ENCODE measurements at regions of chr10 and their contacts with region 1.

Region 1: GRCh38 chr10:48656241-48656913 is 28.3 kb upstream of the WDFY4 start:
- DNase-seq: peak; percentile 93 to 95
- ATAC-seq: peak; percentile 94 to 98 (median 96)
- H3K4me3 ChIP-seq: peak overlapping the region; percentile 68
- H3K27ac ChIP-seq: no peak overlapping the region
- H3K4me1 ChIP-seq: peaks cover 7% of the 10 kb centered on the region
- H3K27me3 ChIP-seq: peaks cover 0 to 19% (median 0%) of the 10 kb centered on the region in 3 donors
- CTCF ChIP-seq: peak; percentile 96

Region 2: GRCh38 chr10:48363617-48364355 is 292.6 kb before region 1 on chr10:
- intact Hi-C with region 1: loop called (anchors 1 to 5 kb)
- DNase-seq: peak in 1 of 2 donors; percentile 12
- ATAC-seq: peak; percentile 61 to 89 (median 65)
- H3K4me3 ChIP-seq: no peak overlapping the region
- H3K27ac ChIP-seq: no peak overlapping the region
- H3K4me1 ChIP-seq: peaks cover 45% of the 10 kb centered on the region
- H3K27me3 ChIP-seq: no peaks in the 10 kb centered on the region
- CTCF ChIP-seq: peak; percentile 76

Region 3: DNA sequence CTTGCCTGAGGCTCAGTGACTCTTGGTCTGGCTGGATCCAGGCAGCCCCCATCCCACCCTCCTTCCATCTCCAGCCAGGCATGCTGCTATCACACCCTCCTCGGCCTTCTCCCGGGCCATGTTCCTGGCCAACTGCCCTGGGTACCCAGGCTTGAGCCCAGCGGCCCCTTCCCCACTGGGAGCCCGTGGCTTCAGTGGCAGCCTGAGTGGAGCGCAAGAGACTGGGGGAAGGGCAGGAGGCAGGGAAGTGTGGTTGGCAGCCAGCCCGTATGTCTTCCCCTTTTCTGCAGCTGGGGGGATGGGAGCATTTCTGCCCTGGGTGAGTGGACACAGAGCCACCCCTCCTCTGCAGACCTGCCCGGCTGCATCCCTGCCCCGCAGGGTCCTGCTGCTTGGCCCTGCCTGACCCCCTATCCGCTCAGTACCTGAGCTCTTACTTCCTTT is 200.0 kb before region 1 on chr10:
- intact Hi-C with region 1: loop called in 1 of 2 experiments (anchors 10 kb)
- DNase-seq: peak; percentile 60 to 69
- ATAC-seq: no peak
- H3K4me3 ChIP-seq: no peak overlapping the region
- H3K27ac ChIP-seq: no peak overlapping the region
- H3K4me1 ChIP-seq: no peaks in the 10 kb centered on the region
- H3K27me3 ChIP-seq: no peaks in the 10 kb centered on the region
- CTCF ChIP-seq: no peak

Region 4: DNA sequence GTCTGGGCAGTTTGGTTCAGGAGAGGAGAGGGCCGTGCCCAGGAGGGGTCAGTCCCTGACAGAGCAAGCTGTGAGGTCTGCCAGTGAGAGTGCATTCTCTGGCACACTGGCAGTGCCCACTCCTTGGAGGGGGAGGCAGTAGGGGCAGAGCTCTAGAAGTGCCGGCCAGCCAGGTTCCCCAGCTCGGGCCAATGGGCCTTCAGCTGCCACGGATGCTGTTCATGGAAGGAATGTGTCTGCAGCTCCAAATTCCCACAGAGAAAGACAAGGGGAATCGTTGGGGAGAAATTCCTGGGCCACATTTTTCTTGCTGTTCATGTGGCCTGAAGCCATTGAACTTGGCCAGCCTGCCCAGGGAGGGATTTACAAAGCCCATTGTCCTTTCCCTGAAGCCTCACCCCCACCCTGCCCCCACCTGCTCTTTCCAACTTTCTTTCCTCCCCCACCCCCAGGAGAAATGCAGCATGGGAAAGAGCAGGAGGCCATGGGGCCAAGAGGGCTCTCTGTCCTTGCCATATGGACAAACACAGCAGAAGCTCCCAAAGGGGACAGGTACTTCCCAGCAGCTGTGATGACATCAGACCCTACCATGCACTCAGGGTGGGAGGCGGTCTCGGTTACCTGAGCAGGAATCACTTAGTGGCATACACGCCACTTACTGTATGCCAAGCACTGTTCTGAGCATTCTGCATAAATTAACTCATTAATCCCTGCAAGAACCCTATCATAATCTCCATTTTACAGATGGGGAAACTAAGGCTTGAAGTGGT is 122.2 kb before region 1 on chr10:
- intact Hi-C with region 1: no loop called
- DNase-seq: no peak
- ATAC-seq: no peak
- H3K4me3 ChIP-seq: no peak overlapping the region
- H3K27ac ChIP-seq: no peak overlapping the region
- H3K4me1 ChIP-seq: no peaks in the 10 kb centered on the region
- H3K27me3 ChIP-seq: no peaks in the 10 kb centered on the region
- CTCF ChIP-seq: no peak

Region 5: GRCh38 chr10:48551861-48552591 is 104.4 kb before region 1 on chr10:
- intact Hi-C with region 1: loop called (anchors 1 to 5 kb)
- DNase-seq: peak; percentile 39 to 69
- ATAC-seq: peak in 3 of 4 donors; percentile 55 to 62 (median 56)
- H3K4me3 ChIP-seq: no peak overlapping the region
- H3K27ac ChIP-seq: no peak overlapping the region
- H3K4me1 ChIP-seq: no peaks in the 10 kb centered on the region
- H3K27me3 ChIP-seq: no peaks in the 10 kb centered on the region
- CTCF ChIP-seq: peak; percentile 60

Region 6: DNA sequence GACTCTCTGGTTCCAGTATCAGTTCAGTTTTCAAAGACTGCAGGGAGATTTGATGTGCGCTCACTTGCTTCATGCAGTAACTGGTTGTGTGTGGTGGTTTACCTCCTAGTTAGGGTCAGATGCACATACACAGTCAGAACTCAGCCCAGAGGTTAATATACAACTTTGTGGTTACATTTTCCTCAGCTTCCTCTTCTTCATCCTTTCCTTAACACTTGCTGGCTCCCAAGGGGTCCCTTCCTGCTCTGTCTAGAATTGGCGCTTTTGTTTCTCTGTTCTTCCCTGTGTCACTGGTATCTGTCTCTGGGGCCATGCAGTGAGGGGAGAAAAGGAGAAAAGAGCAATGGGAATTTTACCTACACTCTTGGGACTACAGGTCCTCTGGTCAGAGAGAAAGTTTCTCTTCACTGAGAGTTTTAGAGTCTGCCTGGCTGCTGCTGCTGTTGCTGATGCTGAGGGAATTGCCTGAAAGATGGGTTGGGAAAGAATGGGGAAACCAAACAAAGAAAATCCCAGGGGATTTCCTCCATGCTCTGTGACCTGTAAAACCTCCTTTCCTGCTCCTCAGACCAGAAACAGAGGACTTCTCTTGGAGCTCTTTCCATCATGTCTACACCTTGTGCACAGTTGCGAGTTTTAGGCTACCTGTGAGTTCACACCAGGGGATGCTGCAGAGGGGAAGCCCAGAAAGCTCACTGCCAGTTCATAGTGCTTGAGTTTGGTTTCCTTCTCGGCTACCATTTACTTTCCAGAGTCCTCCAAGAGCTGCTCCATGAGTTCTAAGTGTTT is 102.9 kb after region 1 on chr10:
- intact Hi-C with region 1: no loop called
- DNase-seq: no peak
- ATAC-seq: no peak
- H3K4me3 ChIP-seq: no peak overlapping the region
- H3K27ac ChIP-seq: no peak overlapping the region
- H3K4me1 ChIP-seq: no peaks in the 10 kb centered on the region
- H3K27me3 ChIP-seq: peaks cover 0 to 3% (median 0%) of the 10 kb centered on the region in 3 donors
- CTCF ChIP-seq: no peak

Region 7: DNA sequence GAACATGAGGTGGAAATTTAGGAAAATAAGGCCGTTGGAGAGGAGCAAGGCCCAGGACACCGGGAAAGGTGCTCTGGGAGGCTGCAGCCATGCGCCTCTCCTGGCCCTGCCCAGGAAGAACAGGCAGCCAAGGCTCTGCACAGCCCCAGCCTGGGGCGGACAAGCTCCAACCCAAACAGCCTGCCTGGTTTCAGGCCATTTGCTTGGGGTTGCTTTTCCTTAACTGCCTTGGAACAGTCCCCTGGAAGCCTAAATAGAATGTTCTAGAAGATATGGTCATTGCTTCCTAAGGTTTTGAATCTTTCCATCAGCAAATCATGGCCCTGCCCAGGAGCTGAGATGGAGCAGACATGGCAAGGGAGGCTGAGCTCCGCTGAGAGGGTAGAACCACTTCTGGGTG is 447.9 kb after region 1 on chr10:
- intact Hi-C with region 1: no loop called
- DNase-seq: no peak
- ATAC-seq: no peak
- H3K4me3 ChIP-seq: no peak overlapping the region
- H3K27ac ChIP-seq: no peak overlapping the region
- H3K4me1 ChIP-seq: peaks cover 9% of the 10 kb centered on the region
- H3K27me3 ChIP-seq: no peaks in the 10 kb centered on the region
- CTCF ChIP-seq: no peak

Region 8: DNA sequence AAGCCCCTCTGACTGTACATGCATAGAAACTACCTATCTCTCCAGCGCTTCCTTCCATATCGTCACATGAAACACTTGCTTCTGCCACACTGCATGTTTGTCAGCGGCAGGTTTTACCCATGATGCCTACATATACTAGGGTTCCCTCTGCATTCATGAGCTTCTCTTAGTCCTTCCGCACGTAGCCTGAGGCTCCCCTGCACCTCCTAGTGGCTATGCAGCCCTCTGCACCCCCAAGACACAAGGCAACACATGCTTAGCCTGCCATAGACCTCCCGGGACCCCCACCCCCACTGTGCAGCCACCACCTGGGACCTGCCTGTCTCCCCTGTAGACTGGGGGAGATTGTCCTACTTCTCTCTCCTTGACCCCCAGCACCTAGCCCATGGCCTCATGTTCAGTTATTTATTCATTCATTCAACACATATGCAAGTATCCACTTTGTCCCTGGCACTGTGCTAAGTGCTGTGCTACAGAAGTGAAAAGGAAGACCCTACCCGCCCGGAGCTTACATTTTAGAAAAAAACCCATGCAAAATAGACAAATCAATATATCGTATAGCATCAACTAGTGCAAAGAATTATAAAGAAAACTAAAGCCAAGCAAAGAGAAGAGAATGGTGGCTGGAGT is 508.3 kb after region 1 on chr10:
- intact Hi-C with region 1: loop called in 1 of 2 experiments (anchors 5 kb)
- DNase-seq: no peak
- ATAC-seq: peak in 3 of 4 donors; percentile 28 to 71 (median 59)
- H3K4me3 ChIP-seq: no peak overlapping the region
- H3K27ac ChIP-seq: no peak overlapping the region
- H3K4me1 ChIP-seq: no peaks in the 10 kb centered on the region
- H3K27me3 ChIP-seq: no peaks in the 10 kb centered on the region
- CTCF ChIP-seq: peak; percentile 45

Region 9: GRCh38 chr10:49512121-49512809 is 855.9 kb after region 1 on chr10:
- intact Hi-C with region 1: loop called in 1 of 2 experiments (anchors 5 kb)
- DNase-seq: no peak
- ATAC-seq: peak; percentile 59 to 74 (median 63)
- H3K4me3 ChIP-seq: no peak overlapping the region
- H3K27ac ChIP-seq: no peak overlapping the region
- H3K4me1 ChIP-seq: no peaks in the 10 kb centered on the region
- H3K27me3 ChIP-seq: no peaks in the 10 kb centered on the region
- CTCF ChIP-seq: peak; percentile 61

Measured in psoas muscle (tissue), 8 donors.